IMR-90 (cell line): ENCODE measurements at regions of chr12 and their contacts with region 1.

Region 1: GRCh38 chr12:45349911-45350310 is 134.0 kb downstream of the ANO6 start:
- DNase-seq: peak; percentile 46
- ATAC-seq: peak; percentile 53
- H3K4me3 ChIP-seq: no peak overlapping the region
- H3K27ac ChIP-seq: no peak overlapping the region
- H3K4me1 ChIP-seq: peaks cover 2% of the 10 kb centered on the region; the same call in 1 of the 2 replicates
- H3K27me3 ChIP-seq: no peaks in the 10 kb centered on the region
- CTCF ChIP-seq: no peak
- POLR2A ChIP-seq: no peak
- RAD21 ChIP-seq: no peak

Region 2: GRCh38 chr12:45298716-45299692 is 50.9 kb before region 1 on chr12:
- CTCF ChIA-PET with region 1: no interaction called
- POLR2A ChIA-PET with region 1: no interaction called
- dilution Hi-C with region 1: no loop called
- in situ Hi-C with region 1: no loop called
- intact Hi-C with region 1: loop called (anchors 5 kb)
- DNase-seq: peak; percentile 64
- ATAC-seq: peak; percentile 61
- H3K4me3 ChIP-seq: no peak overlapping the region
- H3K27ac ChIP-seq: peak overlapping the region; percentile 49; the same call in 1 of the 2 replicates
- H3K4me1 ChIP-seq: 0 out of 2 replicates have a peak, but pooled peaks cover under 1% of the 10 kb centered on the region
- H3K27me3 ChIP-seq: no peaks in the 10 kb centered on the region
- CTCF ChIP-seq: no peak
- POLR2A ChIP-seq: no peak
- RAD21 ChIP-seq: no peak